Posterior vena cava (tissue), 2 donors: ENCODE measurements at regions of chr12 and their contacts with region 1.

Region 1: DNA sequence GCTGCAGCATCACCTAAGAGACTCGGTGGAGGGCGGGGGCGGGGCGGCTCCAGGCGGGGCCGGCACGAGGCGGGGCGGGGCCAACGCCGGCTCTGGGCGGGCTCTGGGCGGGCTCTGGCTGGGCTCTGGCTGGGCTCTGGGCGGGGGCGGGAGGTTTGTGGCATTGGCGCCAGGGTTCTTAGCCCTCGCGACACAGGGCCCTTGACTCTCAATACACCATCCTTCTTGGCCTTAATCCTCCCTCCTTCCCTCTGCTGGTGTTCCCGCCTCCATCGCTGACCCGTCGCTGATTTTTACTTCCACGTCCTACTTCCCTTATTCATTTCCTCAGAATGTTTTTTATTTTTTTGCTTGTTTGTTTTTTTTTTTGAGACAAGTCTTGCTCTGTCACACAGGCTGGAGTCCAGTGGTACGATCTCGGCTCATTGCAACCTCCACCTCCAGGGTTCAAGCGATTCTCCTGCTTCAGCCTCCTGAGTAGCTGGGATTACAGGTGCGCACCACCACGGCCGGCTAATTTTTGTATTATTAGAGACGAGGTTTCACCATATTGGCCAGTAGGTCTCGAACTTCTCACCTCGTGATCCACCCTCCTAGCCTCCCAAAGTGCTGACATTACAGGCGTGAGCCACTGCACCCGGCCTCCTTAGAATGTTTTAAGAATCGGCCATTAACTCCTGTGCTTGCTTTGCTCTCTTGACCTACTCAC is at the start of gene BLTP3B:
- DNase-seq: peak; percentile 97
- total RNA-seq, gene BLTP3B: 45.0 to 88.6 TPM

Region 2: DNA sequence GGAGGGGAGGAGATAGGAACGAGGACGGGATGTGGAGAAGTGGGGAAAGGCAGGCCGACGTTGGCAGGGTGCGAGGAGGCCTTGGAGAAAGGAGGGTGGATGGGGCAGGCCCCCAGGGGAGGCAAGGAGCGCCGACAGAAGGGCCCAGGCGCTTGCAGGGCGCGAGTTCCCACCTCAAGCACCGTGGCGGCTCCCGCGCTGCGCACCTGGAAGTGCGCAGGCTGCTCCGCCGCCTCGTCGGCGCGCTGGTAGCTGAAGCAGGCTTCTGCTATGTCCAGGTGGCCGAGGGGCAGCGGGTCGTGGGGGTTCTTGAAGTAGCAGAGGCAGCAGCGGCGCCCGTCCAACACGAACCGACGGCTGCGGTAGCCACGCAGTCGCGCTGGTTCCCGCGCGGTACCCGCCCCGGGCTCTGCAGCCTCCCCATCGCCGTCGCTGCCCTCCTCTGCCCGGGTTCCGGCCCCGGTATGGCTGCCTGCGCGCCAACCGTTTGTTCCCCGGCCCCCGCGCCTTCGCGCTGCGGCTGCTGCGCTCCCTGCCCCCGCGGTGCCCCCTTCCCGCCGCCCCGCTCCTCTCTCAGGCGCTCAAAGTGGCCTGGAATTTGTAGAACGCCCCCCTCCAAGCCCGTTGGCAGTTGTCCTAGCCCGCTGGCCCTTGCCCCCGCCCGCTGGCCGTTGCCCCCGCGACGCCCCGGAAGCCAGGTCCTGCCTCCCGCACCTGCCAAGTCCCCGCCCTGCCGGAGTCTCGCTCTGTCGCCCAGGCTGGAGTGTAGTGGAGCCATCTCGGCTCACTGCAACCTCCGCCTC is 56.5 kb after region 1 on chr12:
- intact Hi-C with region 1: loop called in 1 of 2 experiments (anchors 10 kb)
- DNase-seq: peak; percentile 89